SK-N-SH (cell line): ENCODE measurements at regions of chr5 and their contacts with region 1.

Region 1: GRCh38 chr5:97162045-97162444 is 19.6 kb upstream of the LIX1 start:
- DNase-seq: peak; percentile 45
- H3K4me3 ChIP-seq: no peak overlapping the region; a peak in 1 of 4 replicates
- H3K27ac ChIP-seq: no peak overlapping the region
- H3K4me1 ChIP-seq: no peaks in the 10 kb centered on the region
- H3K27me3 ChIP-seq: no peaks in the 10 kb centered on the region
- CTCF ChIP-seq: peak; percentile 96
- EP300 ChIP-seq: no peak
- RAD21 ChIP-seq: peak; percentile 89

Region 2: DNA sequence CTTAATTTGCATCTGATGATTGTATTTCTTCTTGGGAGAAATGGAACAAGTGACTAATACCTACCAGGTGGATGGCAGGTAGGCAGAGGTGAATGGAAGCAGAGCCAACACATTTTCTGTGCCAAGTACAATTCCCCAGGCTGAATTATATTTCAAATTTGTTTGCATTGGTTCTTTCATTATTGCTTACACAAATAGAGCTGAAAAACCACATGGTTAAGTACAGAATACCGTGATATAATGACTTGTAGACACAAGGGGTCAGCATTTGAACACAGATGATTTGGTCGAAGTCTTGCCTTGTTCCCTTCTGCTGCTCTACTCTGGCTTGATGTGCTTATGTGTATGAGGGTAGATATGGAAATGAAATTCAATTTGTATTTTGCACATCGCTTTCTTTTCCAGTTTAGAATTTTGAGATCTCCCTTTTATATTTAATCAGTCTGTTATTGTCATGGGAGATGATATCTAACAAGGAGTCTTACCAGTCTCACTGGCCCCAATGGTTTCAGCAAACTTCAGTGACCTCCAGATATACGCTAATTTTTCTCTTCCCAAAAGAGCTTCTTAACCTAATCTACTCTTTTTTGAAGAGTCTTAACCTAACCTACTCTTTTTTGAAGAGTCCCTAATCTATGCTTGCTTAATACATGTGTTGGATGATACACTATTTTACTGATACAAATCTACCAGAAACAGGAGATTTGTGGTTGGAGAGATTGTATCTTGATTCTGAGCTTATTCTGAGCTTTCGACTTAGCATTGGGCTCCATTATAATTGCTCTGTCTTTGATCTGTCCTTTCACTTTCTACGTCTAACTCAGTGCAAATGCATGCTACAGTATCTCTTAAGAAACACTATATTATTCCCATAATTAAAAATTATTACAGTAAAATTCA is 817.1 kb before region 1 on chr5:
- CTCF ChIA-PET with region 1: interaction called, 16 read pairs
- POLR2A ChIA-PET with region 1: no interaction called
- DNase-seq: peak; percentile 36
- H3K4me3 ChIP-seq: no peak overlapping the region; a peak in 1 of 4 replicates
- H3K27ac ChIP-seq: no peak overlapping the region
- H3K4me1 ChIP-seq: peaks cover 0 to 17% of the 10 kb centered on the region in 2 experiments; a peak in 3 of 4 replicates
- H3K27me3 ChIP-seq: no peaks in the 10 kb centered on the region
- CTCF ChIP-seq: peak; percentile 75
- EP300 ChIP-seq: no peak
- RAD21 ChIP-seq: peak; percentile 97

Region 3: GRCh38 chr5:96743065-96743768 is 418.8 kb before region 1 on chr5:
- CTCF ChIA-PET with region 1: interaction called, 27 read pairs
- POLR2A ChIA-PET with region 1: no interaction called
- DNase-seq: no peak
- H3K4me3 ChIP-seq: no peak overlapping the region
- H3K27ac ChIP-seq: peak overlapping the region in 1 of 2 experiments; percentile 27; a peak in 2 of 4 replicates
- H3K4me1 ChIP-seq: peaks cover 0 to 14% of the 10 kb centered on the region in 2 experiments; a peak in 1 of 4 replicates
- H3K27me3 ChIP-seq: no peaks in the 10 kb centered on the region
- CTCF ChIP-seq: no peak
- EP300 ChIP-seq: no peak
- RAD21 ChIP-seq: no peak

Region 4: DNA sequence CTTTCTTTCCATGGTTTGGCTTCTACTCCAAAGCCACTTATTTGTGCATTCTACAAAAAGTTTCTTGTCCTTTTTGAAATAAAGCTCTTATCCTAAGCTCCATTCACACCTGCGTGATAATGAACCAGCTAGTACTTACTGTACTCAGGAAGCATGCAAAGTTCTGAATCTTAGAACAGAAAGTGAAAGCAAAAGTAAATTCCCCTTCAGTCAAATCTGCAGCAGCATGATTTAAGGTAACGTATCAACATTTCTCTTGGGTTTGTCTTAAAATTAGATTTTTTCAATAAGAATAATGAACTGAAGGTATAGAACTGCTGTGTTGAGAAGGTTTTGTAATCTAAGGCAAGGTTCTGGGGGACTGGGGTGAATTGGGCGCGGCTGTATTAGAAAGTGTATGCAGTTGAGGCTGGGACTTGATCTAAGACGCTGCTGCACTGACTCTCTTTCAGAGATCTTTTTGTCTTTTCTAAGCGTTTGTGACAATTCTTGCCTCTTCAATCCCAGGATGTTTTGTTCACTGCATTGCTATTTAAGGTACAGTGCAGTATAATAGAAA is 285.7 kb before region 1 on chr5 and contains the start of gene ERAP2:
- CTCF ChIA-PET with region 1: interaction called, 80 read pairs
- POLR2A ChIA-PET with region 1: no interaction called
- DNase-seq: no peak
- H3K4me3 ChIP-seq: peak within 1 kb of the TSS; percentile 37 to 52; a peak in 3 of 4 replicates
- H3K27ac ChIP-seq: peak within 1 kb of the TSS in 1 of 2 experiments; percentile 1; a peak in 1 of 4 replicates
- H3K4me1 ChIP-seq: no peaks in the 10 kb centered on the region; a peak in 2 of 4 replicates
- H3K27me3 ChIP-seq: no peaks in the 10 kb centered on the region
- CTCF ChIP-seq: no peak
- EP300 ChIP-seq: no peak
- RAD21 ChIP-seq: no peak
- polyA plus RNA-seq, gene ERAP2: 13.2 and 14.3 TPM in 2 replicates

Region 5: GRCh38 chr5:97149709-97150108 is 12.3 kb before region 1 on chr5:
- CTCF ChIA-PET with region 1: interaction called, 37 read pairs
- POLR2A ChIA-PET with region 1: no interaction called
- DNase-seq: no peak
- H3K4me3 ChIP-seq: no peak overlapping the region
- H3K27ac ChIP-seq: no peak overlapping the region
- H3K4me1 ChIP-seq: no peaks in the 10 kb centered on the region
- H3K27me3 ChIP-seq: no peaks in the 10 kb centered on the region
- CTCF ChIP-seq: no peak
- EP300 ChIP-seq: no peak
- RAD21 ChIP-seq: no peak